Activated CD4-positive, alpha-beta memory T cell treated with anti-CD3 and anti-CD28 coated beads for 36 hours (primary cell): ENCODE measurements at regions of chr11 and their contacts with region 1.

Region 1: DNA sequence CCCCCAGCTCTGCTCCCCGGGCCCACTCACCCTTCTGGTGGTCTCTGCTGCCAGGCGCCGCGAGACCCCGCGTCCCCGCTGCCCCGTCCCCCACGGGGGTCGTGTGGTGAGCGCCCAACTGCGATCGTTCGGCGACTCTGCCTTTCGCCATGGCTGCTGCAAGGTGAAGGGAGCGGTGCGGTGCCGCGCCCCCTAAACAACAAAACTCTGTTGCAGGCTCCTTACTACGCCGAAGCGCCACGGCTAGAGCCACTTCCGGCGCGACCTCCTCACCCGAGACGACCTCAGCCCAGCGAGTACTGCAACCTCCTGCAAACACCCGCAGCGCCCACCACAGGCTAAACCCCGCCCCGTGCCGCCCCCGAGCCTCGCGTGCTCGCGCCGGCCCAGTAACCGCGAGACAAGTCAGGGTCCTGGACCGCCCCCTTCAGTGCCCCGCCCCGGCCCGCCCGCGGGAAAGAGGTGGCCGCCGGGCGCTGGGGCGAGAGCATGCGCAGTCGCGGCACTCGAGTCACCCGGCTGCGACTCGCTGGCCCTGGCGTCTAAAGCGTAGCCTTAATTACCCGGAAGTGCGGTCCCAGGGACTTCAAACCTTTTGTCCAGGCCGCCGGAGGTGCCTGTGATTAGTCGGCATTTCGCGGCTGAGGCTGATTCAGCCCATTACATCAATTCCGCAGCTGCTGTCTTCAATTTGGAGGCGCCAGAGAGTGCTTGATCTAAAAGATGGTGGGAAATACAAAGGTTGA is at the start of gene TMEM41B:
- DNase-seq: peak; percentile 99
- H3K4me3 Mint-ChIP-seq: peak within 1 kb of the TSS; percentile 97
- H3K27ac Mint-ChIP-seq: peak within 1 kb of the TSS; percentile 95
- H3K4me1 Mint-ChIP-seq: peaks cover 33% of the 10 kb centered on the region
- H3K27me3 Mint-ChIP-seq: peaks cover 10% of the 10 kb centered on the region
- total RNA-seq, gene TMEM41B: 33.6 to 36.1 TPM

Region 2: DNA sequence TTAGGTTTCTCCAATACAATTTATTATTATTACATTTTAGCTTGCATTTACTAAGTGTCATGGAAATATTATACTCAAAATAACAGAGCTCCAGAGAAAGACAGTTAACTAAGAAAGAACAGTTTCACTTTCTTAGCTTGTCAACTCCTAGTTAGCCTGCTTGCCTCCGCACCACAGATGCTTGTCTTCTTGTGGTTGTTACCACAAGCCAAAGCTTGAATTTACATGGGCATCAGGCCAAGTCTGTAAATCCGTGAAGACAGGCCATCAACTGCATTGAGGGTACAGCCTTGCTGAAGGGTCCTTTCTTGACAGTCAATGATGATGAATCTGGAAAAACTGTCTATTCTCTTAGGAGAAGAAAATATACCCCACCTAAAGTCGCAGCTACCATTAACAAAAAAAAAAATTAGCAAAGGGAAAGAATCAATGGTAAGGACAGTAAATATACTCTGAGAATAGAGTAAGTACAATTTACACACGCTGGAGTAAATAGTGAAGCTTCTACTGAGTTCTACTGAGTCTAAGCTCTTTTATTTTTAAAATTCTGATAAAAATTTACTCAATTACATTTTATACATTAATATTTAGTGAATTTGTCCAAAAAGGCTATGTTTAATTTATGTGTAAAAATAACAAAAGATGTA is 33.7 kb before region 1 on chr11:
- CTCF ChIA-PET with region 1: no interaction called
- POLR2A ChIA-PET with region 1: no interaction called
- intact Hi-C with region 1: loop called (anchors 1 kb)
- DNase-seq: peak; percentile 69
- H3K4me3 Mint-ChIP-seq: no peak overlapping the region
- H3K27ac Mint-ChIP-seq: no peak overlapping the region
- H3K4me1 Mint-ChIP-seq: peaks cover 13% of the 10 kb centered on the region
- H3K27me3 Mint-ChIP-seq: no peaks in the 10 kb centered on the region

Region 3: DNA sequence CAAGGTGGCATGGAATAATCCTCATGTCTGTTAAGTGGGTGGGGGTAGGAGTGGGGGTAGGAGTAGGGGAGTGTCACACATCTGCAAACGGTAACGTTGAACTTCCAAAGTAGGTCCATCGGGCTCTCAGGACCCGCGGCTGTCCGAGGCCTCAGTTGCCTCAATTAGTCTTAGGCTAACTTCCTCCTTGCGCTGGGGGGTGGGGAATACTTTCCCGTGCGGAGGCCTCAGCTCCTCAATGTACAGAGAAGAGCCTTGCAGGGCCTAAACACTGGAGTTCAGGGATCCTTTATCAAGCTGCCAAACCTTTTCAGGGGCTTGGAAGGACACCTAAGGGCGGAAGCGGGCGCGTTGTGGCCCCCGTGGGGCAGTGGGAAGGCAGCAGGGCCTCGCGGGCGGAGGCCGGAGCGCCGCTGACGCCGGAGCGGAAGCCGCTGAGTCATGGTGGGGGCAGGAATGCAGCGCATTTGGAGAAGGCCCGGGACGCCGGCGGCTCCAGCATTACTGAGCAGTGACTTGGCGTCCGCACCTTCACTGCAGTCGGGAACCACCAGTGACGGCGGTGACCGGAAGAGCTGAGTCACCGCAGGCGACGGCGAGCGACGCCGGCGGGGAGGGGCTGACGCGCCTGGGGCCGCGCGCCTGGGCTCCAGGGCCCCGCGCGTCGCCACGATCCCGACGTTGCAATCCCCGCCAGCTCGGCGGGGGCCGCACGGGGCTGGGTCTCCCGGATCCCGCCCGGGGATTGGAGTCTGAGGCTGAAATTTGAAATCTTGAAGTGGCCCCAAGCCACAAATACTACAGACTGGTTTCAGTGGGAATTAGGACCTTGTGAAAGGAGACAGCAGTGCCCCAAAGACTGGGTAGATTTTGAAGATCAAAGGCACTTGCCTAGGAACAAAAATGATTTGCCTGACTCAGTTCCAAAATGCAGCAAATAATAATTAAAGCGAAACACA is 49.8 kb after region 1 on chr11:
- CTCF ChIA-PET with region 1: no interaction called
- POLR2A ChIA-PET with region 1: no interaction called
- intact Hi-C with region 1: loop called (anchors 1 kb)
- DNase-seq: peak; percentile 93
- H3K4me3 Mint-ChIP-seq: peak overlapping the region; percentile 74
- H3K27ac Mint-ChIP-seq: peak overlapping the region; percentile 88
- H3K4me1 Mint-ChIP-seq: peaks cover 35% of the 10 kb centered on the region
- H3K27me3 Mint-ChIP-seq: no peaks in the 10 kb centered on the region

Region 4: GRCh38 chr11:9384535-9385303 is 70.3 kb after region 1 on chr11 and contains the start of gene IPO7:
- CTCF ChIA-PET with region 1: interaction called, 13 read pairs
- POLR2A ChIA-PET with region 1: interaction called, 13 read pairs
- intact Hi-C with region 1: loop called (anchors 1 kb)
- DNase-seq: peak; percentile 93
- H3K4me3 Mint-ChIP-seq: peak within 1 kb of the TSS; percentile 96
- H3K27ac Mint-ChIP-seq: peak within 1 kb of the TSS; percentile 87
- H3K4me1 Mint-ChIP-seq: peaks cover 29% of the 10 kb centered on the region
- H3K27me3 Mint-ChIP-seq: no peaks in the 10 kb centered on the region
- total RNA-seq, gene IPO7: 161 to 172 TPM

Region 5: GRCh38 chr11:9565822-9566560 is 251.5 kb after region 1 on chr11:
- CTCF ChIA-PET with region 1: no interaction called
- POLR2A ChIA-PET with region 1: no interaction called
- intact Hi-C with region 1: loop called (anchors 2 kb)
- DNase-seq: peak; percentile 80
- H3K4me3 Mint-ChIP-seq: peak overlapping the region; percentile 36
- H3K27ac Mint-ChIP-seq: peak overlapping the region; percentile 82
- H3K4me1 Mint-ChIP-seq: peaks cover 37% of the 10 kb centered on the region
- H3K27me3 Mint-ChIP-seq: no peaks in the 10 kb centered on the region